Kidney (tissue), 22 donors: ENCODE measurements at regions of chr18 and their contacts with region 1.

Region 1: DNA sequence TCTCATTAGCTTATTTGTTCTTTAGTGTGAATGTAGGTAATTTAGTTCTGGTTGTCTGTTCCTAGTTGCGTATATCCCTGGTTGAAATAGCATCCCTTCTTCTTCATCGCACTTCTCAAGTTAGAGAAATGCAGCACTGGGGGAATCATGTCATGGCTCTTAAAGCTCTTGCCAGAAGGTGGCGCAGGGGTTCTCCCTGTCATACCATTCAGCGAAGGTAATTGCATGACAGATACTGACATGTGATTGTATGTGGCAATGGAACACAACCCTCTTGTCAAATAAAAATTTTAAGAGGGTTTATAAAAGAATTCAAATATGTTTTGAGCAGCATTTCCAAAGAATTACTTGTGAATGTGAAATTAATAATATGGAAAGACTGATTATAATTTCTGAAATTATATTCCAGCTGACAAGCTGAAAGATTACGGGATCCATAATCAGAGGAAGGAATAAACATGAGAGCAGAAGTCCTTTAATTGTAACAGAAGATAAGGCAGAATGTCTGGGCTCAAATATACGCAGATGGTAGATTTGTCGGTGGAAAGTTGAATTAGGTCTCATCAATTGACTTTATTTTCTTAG is 411.7 kb downstream of the DSEL start:
- DNase-seq: peak in 4 of 5 donors; percentile 38 to 72 (median 54)
- H3K4me3 ChIP-seq: no peak overlapping the region
- H3K27ac ChIP-seq: no peak overlapping the region
- H3K4me1 ChIP-seq: peaks cover 0 to 6% (median 0%) of the 10 kb centered on the region in 3 donors
- H3K27me3 ChIP-seq: no peaks in the 10 kb centered on the region
- CTCF ChIP-seq: peak; percentile 71

Region 2: GRCh38 chr18:67199993-67200617 is 95.3 kb after region 1 on chr18:
- intact Hi-C with region 1: loop called (anchors 10 kb)
- DNase-seq: peak in 2 of 5 donors; percentile 64 to 81
- H3K4me3 ChIP-seq: no peak overlapping the region
- H3K27ac ChIP-seq: no peak overlapping the region
- H3K4me1 ChIP-seq: no peaks in the 10 kb centered on the region
- H3K27me3 ChIP-seq: no peaks in the 10 kb centered on the region
- CTCF ChIP-seq: peak; percentile 68